Caco-2 (cell line): ENCODE measurements at regions of chr2 and their contacts with region 1.

Region 1: DNA sequence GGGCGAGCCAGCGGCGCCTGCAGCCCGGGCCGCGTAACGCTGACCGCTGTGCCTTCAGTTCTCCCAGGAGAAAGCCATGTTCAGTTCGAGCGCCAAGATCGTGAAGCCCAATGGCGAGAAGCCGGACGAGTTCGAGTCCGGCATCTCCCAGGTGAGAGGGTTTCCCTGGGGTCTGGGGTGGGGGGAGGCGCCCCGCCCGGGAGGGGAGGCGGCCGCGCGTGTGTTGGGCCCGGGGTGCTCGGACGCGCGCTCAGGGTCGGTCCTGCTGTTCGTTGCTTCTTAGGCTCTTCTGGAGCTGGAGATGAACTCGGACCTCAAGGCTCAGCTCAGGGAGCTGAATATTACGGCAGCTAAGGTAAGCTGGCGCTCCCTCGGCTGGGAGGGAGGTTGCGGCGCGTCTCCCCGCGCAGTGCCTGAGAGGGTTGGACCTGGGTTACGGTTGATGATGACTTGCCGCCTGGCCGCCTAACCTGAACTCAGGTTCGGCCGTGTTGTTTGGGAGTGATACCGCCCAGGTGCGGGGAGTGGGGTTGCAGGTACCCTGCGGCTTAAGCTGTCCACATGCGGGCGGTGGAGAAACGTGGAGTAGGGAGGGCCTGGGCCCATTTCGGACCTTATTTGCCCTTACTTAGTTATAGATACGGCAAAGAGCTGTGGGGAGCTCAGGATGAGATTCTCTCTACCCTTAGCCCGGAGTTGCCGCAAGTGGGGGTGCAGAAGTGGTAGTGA is 638 bp downstream of the RPS7 start:
- DNase-seq: no peak
- H3K4me3 ChIP-seq: peak overlapping the region; percentile 97
- H3K4me3 Mint-ChIP-seq: peak overlapping the region; percentile 95
- H3K27ac Mint-ChIP-seq: peak overlapping the region; percentile 96
- H3K4me1 ChIP-seq: peaks cover 17% of the 10 kb centered on the region
- H3K4me1 Mint-ChIP-seq: peaks cover 34% of the 10 kb centered on the region
- H3K27me3 ChIP-seq: no peaks in the 10 kb centered on the region
- H3K27me3 Mint-ChIP-seq: no peaks in the 10 kb centered on the region
- CTCF ChIP-seq: no peak

Region 2: DNA sequence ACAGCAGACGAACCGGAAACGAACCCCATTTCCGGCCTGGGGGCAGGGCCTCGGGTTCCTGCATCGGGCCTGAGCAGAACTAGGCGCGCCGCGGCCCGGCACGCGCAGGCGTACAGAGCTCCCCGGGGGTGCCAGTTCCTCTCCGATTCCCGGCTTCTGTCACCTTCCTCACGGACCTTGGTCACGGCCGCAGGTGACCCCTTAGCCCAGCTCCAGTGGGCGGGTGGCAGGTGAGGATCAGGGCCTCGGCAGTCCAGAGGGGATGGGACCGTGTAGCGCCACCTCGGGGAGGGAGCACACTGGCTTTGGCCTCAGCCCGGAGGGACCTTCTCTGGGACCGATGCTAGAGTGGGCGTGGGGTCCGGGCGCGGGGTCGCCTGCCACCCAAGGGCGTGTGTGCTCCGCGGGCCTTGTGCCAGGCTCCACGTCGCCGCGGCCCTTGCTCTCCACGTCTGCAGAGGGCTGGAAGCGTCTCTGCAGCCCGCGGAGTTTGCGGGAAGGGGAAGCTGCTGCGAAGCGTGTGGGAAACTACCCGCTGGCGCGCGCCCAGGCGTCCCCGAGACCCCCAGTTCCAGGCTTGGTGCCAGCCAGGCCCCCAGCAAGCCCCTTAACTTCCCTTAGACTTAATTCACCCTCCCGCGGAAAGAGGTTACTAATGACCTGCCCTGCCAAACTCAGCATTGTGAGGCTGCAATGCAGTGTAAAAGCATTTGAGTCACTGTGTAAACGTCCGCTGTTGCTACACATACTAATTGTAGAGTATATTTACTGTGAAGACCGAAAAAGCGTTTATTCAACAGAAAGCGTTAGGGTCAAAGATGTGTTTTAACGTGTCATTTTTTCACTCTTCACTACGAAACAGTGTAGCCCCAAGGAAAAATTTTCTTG is 195.8 kb before region 1 on chr2 and contains the start of gene TRAPPC12:
- CTCF ChIA-PET with region 1: no interaction called
- POLR2A ChIA-PET with region 1: no interaction called
- intact Hi-C with region 1: loop called (anchors 1 kb)
- DNase-seq: peak; percentile 95 to 97
- H3K4me3 ChIP-seq: peak within 1 kb of the TSS; percentile 91
- H3K4me3 Mint-ChIP-seq: peak within 1 kb of the TSS; percentile 99
- H3K27ac Mint-ChIP-seq: peak within 1 kb of the TSS; percentile 96
- H3K4me1 ChIP-seq: peaks cover 10% of the 10 kb centered on the region
- H3K4me1 Mint-ChIP-seq: peaks cover 6% of the 10 kb centered on the region
- H3K27me3 ChIP-seq: no peaks in the 10 kb centered on the region
- H3K27me3 Mint-ChIP-seq: no peaks in the 10 kb centered on the region
- CTCF ChIP-seq: peak in 1 of 2 experiments; percentile 79
- total RNA-seq, gene TRAPPC12: 84.2 and 85.0 TPM in 2 replicates

Region 3: GRCh38 chr2:3423492-3424175 is 152.1 kb before region 1 on chr2:
- CTCF ChIA-PET with region 1: interaction called, 3 read pairs
- POLR2A ChIA-PET with region 1: no interaction called
- intact Hi-C with region 1: loop called (anchors 5 kb)
- DNase-seq: peak; percentile 76 to 84
- H3K4me3 ChIP-seq: no peak overlapping the region
- H3K4me3 Mint-ChIP-seq: no peak overlapping the region
- H3K27ac Mint-ChIP-seq: no peak overlapping the region
- H3K4me1 ChIP-seq: 0 out of 2 replicates have a peak, but pooled peaks cover 3% of the 10 kb centered on the region
- H3K4me1 Mint-ChIP-seq: peaks cover 8% of the 10 kb centered on the region
- H3K27me3 ChIP-seq: no peaks in the 10 kb centered on the region
- H3K27me3 Mint-ChIP-seq: no peaks in the 10 kb centered on the region
- CTCF ChIP-seq: peak; percentile 90 to 97

Region 4: GRCh38 chr2:3683748-3684454 is 108.2 kb after region 1 on chr2:
- CTCF ChIA-PET with region 1: no interaction called
- POLR2A ChIA-PET with region 1: no interaction called
- intact Hi-C with region 1: no loop called
- DNase-seq: no peak
- H3K4me3 ChIP-seq: no peak overlapping the region
- H3K4me3 Mint-ChIP-seq: no peak overlapping the region
- H3K27ac Mint-ChIP-seq: no peak overlapping the region
- H3K4me1 ChIP-seq: no peaks in the 10 kb centered on the region
- H3K4me1 Mint-ChIP-seq: no peaks in the 10 kb centered on the region
- H3K27me3 ChIP-seq: no peaks in the 10 kb centered on the region
- H3K27me3 Mint-ChIP-seq: peaks cover 21% of the 10 kb centered on the region
- CTCF ChIP-seq: no peak

Region 5: DNA sequence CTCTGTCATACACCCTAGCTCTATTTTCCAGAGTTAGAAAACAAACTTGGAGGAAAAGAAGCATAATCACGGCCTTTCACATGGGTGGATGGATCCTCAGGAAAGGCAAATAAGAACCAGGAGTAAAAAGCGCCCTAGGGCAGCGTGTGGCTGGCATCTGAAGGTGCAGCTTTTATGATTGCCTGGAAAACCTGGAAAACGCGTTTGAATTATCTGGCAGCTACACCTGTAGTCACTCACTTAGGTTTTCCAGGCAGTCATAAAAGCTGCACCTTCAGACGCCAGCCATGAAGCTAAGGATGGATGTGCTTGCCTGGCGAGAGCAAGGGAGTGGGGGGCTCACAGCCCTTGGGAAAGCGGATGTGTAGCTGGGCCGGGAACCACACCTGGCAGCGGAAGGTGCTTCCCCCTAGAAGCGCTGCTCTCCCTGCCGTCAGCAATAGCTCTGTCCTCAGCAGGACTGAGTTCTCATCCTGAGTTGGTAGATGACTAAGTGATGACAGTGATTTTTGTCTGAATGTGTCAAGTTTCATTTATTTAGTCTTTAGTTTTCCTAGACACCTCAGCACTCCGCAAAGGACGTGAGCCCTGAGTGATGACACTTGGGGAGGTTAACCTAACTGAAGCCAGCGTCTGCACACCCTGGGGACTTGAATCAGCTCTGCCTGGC is 209.7 kb after region 1 on chr2:
- CTCF ChIA-PET with region 1: no interaction called
- POLR2A ChIA-PET with region 1: no interaction called
- intact Hi-C with region 1: no loop called
- DNase-seq: peak in 1 of 2 experiments; percentile 13
- H3K4me3 ChIP-seq: no peak overlapping the region
- H3K4me3 Mint-ChIP-seq: no peak overlapping the region
- H3K27ac Mint-ChIP-seq: no peak overlapping the region
- H3K4me1 ChIP-seq: no peaks in the 10 kb centered on the region
- H3K4me1 Mint-ChIP-seq: no peaks in the 10 kb centered on the region
- H3K27me3 ChIP-seq: no peaks in the 10 kb centered on the region
- H3K27me3 Mint-ChIP-seq: peaks cover 7% of the 10 kb centered on the region
- CTCF ChIP-seq: no peak